Prostate gland (tissue), 2 donors: ENCODE measurements at regions of chrX and their contacts with region 1.

Region 1: DNA sequence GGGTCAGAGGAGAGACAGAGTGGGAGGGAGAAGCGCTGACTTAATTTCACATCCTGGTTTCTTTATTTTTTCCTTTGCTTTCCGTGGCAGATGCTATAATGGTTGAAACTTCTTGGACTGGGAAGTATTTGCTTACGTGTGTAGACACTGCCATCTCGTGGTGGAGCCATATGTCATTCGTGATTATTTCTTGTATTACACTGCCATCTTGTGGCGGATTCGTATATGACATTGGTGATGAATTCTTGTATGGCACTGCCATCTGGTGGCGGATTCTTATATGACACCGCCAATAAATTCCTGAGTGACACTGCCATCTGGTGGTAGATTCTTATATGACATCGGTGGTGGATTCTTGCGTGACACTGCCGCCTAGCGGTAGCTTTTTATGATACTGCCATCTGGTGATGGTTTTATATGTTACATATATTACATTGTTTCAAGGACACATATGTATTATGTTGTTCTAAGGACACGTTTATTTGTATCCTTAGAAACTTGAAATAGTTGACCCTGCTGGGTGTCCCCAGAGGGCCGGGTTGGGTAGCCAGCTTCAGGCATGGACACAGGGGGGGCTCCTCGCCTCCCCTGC is 37.3 kb upstream of the CLCN4 start:
- DNase-seq: peak; percentile 48
- H3K4me3 ChIP-seq: no peak overlapping the region
- H3K27ac ChIP-seq: peak overlapping the region in 1 of 2 donors; percentile 35
- H3K4me1 ChIP-seq: no peaks in the 10 kb centered on the region
- H3K27me3 ChIP-seq: no peaks in the 10 kb centered on the region
- CTCF ChIP-seq: peak; percentile 98 to 100 (median 100)
- POLR2A ChIP-seq: no peak

Region 2: DNA sequence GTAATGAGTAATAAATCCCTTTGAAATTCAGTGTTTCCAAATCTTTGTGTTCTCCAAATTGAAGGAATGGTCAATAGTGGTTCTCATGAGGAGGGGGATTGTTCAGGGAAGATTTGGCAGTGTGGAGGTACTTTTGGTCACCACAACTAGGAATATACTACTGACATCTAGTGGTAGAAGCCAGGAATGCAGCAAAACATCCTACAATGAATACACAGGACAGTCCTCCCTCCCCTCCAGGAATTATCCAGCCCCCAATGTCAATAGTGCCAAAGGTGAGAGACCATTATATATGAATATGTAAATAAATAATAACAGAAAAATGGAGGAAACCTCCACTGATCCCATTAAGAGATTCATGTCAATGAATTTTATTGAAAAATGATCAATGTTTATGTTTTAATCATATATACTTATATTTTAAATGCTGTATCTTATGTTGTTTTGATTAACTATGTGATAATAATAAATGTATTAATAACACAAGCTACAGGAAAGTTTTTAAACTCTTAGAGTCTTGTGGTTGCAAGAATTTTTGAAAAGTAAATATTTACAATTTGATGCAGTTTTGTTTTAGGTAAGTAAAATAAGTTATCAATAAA is 1303.9 kb before region 1 on chrX:
- intact Hi-C with region 1: loop called (anchors 10 kb)
- DNase-seq: peak; percentile 6
- H3K4me3 ChIP-seq: no peak overlapping the region
- H3K27ac ChIP-seq: no peak overlapping the region
- H3K4me1 ChIP-seq: no peaks in the 10 kb centered on the region
- H3K27me3 ChIP-seq: no peaks in the 10 kb centered on the region
- CTCF ChIP-seq: peak in 3 of 4 experiments; percentile 27 to 59 (median 52)
- POLR2A ChIP-seq: no peak

Region 3: GRCh38 chrX:9885150-9885549 is 234.3 kb before region 1 on chrX:
- intact Hi-C with region 1: loop called (anchors 10 kb)
- DNase-seq: peak; percentile 35
- H3K4me3 ChIP-seq: no peak overlapping the region
- H3K27ac ChIP-seq: no peak overlapping the region
- H3K4me1 ChIP-seq: no peaks in the 10 kb centered on the region
- H3K27me3 ChIP-seq: no peaks in the 10 kb centered on the region
- CTCF ChIP-seq: peak in 2 of 4 experiments; percentile 33 to 52
- POLR2A ChIP-seq: no peak

Region 4: DNA sequence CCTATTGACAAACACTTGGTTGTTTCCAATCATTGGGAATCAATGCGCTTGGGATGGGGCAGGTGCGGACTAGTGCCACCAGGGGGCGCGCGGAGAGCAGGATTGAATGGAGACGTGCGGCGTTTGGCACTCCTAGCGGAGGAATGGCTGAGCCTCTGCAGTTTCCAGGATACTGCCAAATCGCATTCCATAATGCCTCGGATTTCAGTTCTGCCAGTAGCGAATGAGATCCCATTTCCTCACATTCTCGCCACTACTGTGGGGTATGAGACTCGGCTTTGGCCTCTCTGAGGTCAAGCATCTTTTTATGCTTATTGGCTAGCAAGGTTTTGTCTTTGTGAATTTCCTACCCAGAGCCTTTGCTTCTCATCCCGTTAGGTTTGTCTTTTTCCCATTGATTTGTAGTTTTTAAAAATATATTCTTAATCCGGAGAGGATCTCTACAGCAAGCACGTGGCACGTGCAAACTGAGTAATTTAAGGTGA is 123.6 kb before region 1 on chrX:
- intact Hi-C with region 1: loop called (anchors 1 kb)
- DNase-seq: peak; percentile 69
- H3K4me3 ChIP-seq: no peak overlapping the region
- H3K27ac ChIP-seq: no peak overlapping the region
- H3K4me1 ChIP-seq: no peaks in the 10 kb centered on the region
- H3K27me3 ChIP-seq: no peaks in the 10 kb centered on the region
- CTCF ChIP-seq: peak; percentile 80 to 98 (median 92)
- POLR2A ChIP-seq: no peak

Region 5: DNA sequence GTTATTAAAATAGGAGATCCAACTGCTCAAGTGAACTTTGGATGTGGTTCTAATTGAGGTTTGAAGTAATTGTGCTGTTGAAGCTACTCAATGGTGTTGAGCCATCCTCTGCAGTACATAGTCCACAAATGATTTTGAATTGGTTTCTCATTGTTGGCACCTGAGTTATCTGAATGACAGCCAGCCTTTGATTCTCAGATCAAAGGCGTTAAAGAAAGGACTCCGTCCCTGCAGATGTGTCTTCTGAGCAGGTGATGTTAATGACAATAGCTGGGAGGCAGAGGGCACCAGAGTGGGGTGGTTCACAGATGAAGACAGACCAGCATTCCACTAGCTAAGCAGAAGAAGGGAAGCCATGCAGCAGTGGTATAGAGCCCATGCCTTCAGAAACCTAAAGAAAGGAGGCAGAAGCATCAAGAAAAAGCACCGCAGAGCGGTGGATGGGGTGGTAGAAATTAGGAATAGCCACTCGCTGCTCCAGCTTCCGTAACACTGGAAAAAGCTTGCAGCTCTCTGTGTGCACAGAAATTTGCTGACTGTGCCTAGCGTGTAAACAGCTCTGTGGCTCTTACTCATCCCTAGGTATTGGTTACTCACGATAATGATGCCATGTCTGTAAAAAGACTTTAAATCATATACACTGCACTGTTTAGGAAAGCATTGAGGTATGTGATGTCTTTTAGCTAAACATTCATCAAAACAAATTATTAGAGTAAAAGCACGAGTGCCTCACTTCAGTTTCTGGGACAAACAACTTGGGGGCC is 41.9 kb before region 1 on chrX:
- intact Hi-C with region 1: no loop called
- DNase-seq: no peak
- H3K4me3 ChIP-seq: no peak overlapping the region
- H3K27ac ChIP-seq: no peak overlapping the region
- H3K4me1 ChIP-seq: no peaks in the 10 kb centered on the region
- H3K27me3 ChIP-seq: no peaks in the 10 kb centered on the region
- CTCF ChIP-seq: no peak
- POLR2A ChIP-seq: no peak